Activated T-helper 2 cell treated with anti-CD3 and anti-CD28 coated beads, Interferon-gamma antibody, Interleukin-2, Interleukin-4, amounts not matched to agents 10 μg/mL and 5 μg/mL and 100 μg/mL, durations not matched to agents 14 hours and 24 hours and 36 hours (primary cell): ENCODE measurements at regions of chrX and their contacts with region 1.

Region 1: GRCh38 chrX:38803586-38804431 is 2.5 kb downstream of the MID1IP1 start:
- DNase-seq: peak; percentile 74
- H3K4me3 Mint-ChIP-seq: peak overlapping the region; percentile 100
- H3K27ac Mint-ChIP-seq: peak overlapping the region; percentile 98
- H3K4me1 Mint-ChIP-seq: peaks cover 15% of the 10 kb centered on the region
- H3K27me3 Mint-ChIP-seq: no peaks in the 10 kb centered on the region

Region 2: DNA sequence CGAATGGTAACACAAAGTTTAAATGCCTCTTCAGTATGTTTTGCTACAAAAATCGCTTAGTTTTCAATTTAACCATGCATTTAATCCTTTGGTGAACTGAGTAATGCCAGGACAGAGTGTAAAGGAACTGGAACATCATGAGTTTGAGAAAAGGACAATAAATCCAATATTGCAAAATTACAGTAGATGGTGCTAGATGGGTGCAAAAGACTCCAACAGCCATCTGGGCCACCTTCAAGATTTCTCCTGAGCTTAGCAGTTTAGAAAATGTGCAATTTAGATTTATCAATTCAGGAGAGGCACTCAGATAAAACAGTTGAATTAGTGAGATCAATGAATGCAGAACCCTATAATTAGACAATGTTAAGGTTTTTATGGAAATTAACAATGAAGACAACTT is 35.7 kb before region 1 on chrX:
- intact Hi-C with region 1: no loop called
- DNase-seq: no peak
- H3K4me3 Mint-ChIP-seq: no peak overlapping the region
- H3K27ac Mint-ChIP-seq: no peak overlapping the region
- H3K4me1 Mint-ChIP-seq: no peaks in the 10 kb centered on the region
- H3K27me3 Mint-ChIP-seq: peaks cover 7% of the 10 kb centered on the region

Region 3: DNA sequence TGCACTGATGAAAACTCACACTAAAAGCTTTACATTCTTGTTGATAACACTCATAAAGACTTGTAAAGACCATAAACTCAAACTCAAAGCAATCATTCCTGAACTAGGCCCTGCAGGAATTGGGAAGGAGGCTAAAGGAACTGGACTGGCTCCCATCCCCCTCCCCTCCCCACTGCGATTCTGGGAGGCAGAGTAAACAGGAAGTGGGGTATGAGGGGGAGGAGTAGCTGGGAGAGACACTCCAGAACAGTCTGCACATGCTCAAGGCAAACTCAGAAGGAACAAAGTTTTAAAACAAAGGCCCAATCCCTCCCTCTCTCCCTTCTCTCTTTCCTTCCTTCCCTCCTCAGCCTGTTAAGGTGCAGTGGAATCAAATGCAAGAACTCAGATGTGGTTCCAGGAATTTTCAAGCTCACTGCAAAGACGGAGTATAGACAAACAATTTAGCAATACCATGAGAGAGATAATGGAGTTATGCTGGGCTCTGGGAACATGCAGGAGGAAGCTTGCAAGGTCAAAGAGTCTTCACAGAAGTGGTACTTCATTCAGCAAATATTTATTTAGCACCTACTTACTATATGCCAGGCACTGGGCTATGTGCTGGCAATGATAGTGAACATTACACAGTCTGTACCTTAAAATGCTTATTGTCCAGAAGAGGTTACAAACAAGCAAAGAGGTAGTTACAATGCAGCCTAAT is 13.3 kb after region 1 on chrX:
- intact Hi-C with region 1: loop called (anchors 2 kb)
- DNase-seq: no peak
- H3K4me3 Mint-ChIP-seq: no peak overlapping the region
- H3K27ac Mint-ChIP-seq: no peak overlapping the region
- H3K4me1 Mint-ChIP-seq: peaks cover 3% of the 10 kb centered on the region
- H3K27me3 Mint-ChIP-seq: no peaks in the 10 kb centered on the region

Region 4: DNA sequence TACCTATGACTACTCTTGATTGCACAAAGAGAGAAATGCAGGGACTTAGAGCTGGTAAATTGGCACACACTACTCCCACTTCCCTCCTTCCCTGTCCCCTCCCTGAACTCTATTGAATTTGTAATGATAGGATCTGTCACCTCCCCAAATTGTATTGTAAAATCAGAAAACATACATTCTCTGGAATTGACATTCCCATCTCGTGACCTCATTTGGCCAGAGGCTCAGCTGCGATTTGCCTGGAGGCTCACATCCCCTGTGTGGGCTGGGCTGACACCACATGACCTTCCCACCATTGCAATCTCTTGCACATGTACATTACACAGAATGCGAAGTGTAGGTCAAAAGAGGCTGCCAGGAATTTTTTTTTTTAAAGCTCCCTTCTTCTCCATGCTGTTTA is 169.5 kb after region 1 on chrX:
- intact Hi-C with region 1: loop called (anchors 5 kb)
- DNase-seq: no peak
- H3K4me3 Mint-ChIP-seq: no peak overlapping the region
- H3K27ac Mint-ChIP-seq: no peak overlapping the region
- H3K4me1 Mint-ChIP-seq: peaks cover 11% of the 10 kb centered on the region
- H3K27me3 Mint-ChIP-seq: no peaks in the 10 kb centered on the region

Region 5: DNA sequence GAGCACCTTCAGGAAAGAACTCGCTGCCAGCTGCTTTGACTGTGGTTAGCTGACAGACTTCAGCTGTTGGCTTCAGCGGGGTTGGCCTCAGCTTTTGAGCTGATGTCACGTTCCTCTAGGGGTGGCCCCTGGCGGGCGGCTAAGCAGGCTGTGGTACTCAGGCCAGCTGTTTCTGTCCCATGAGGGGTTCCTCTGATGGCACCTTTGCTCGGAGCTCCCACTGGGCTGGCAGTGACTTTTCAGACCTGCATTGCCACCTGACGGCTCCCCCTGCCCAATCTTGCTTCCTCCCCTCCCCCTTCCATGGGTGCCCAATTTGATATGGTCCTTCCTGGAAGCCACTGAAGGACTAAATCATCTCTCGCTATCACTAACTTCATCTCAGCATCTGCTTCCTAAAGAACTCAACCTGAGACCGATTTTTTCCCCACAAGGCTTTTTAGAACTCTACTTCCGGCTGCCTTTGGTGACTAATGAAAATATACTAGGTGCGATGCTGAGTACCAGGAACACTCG is 774.6 kb after region 1 on chrX:
- intact Hi-C with region 1: loop called (anchors 10 kb)
- DNase-seq: peak; percentile 31
- H3K4me3 Mint-ChIP-seq: peak overlapping the region; percentile 52
- H3K27ac Mint-ChIP-seq: peak overlapping the region; percentile 76
- H3K4me1 Mint-ChIP-seq: peaks cover 34% of the 10 kb centered on the region
- H3K27me3 Mint-ChIP-seq: no peaks in the 10 kb centered on the region

Region 6: GRCh38 chrX:40169193-40170101 is 1365.6 kb after region 1 on chrX:
- intact Hi-C with region 1: loop called (anchors 5 kb)
- DNase-seq: peak; percentile 80
- H3K4me3 Mint-ChIP-seq: peak overlapping the region; percentile 81
- H3K27ac Mint-ChIP-seq: peak overlapping the region; percentile 94
- H3K4me1 Mint-ChIP-seq: peaks cover 37% of the 10 kb centered on the region
- H3K27me3 Mint-ChIP-seq: no peaks in the 10 kb centered on the region